ENCODE measurements at regions of chr11 and their contacts with region 1.

Region 1: DNA sequence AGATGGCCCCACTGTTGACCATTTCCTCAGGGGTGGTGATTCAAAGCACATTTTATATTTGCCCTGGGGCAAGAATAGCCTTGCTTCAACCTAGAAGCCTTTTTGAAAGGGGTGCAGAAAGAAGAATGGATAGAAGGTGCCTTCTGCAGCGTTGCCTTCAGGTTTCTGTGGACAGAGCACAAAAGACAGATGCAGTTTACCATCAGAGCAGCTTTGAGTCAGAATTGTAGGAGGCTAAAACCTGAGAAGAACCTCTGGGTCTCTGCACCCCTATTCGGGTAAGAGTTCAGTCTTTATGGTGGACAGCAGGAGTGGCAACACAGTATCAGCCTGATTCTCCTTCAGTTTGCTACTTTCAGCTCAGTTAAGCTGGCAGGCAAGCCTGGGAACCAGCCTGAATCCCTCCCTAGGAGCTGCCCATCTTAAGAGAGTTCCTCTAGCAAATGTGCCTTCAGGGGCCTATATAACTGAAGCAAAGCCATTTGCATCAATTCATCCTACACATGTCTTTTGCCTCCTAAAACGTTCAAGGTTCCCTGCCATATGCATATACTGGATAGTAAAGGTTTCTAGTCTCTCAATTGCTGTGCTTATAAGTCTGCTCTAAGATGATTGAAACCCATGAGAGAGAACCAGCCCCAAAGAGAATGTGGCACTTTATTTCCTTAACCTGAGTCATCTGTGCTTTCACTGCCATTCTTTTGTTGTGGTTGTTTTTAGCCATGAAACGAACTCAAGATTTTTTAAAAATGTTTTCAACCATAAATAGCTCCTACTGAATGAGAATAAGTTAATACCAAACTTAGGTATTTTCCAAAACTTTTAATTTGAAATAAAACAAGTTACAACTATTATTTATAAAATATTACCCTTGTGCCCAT is 123.0 kb downstream of the TRIM44 start:
- DNase-seq: no peak

Region 2: DNA sequence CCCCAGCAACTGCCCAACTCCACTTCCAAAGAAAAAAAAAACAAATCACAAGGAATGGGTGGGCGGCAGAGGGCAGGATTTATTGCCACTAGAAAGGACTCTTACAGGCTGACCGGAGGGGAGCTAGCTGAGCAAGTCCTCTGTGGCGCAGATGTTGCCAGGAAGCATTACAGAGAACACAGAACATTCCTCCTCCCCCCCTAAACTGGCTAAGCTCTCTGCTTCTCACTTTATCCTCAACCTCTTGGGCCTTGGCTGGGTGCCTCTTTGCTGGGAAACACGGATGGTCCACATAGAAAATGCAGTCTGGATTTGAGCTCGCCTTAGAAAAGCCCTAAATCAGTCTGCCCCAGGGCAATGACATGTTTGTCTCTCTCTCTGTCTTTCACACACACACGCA is 179.8 kb before region 1 on chr11:
- intact Hi-C with region 1: no loop called
- DNase-seq: no peak

Region 3: GRCh38 chr11:35735903-35736302 is 49.6 kb before region 1 on chr11:
- intact Hi-C with region 1: no loop called
- DNase-seq: no peak

Region 4: DNA sequence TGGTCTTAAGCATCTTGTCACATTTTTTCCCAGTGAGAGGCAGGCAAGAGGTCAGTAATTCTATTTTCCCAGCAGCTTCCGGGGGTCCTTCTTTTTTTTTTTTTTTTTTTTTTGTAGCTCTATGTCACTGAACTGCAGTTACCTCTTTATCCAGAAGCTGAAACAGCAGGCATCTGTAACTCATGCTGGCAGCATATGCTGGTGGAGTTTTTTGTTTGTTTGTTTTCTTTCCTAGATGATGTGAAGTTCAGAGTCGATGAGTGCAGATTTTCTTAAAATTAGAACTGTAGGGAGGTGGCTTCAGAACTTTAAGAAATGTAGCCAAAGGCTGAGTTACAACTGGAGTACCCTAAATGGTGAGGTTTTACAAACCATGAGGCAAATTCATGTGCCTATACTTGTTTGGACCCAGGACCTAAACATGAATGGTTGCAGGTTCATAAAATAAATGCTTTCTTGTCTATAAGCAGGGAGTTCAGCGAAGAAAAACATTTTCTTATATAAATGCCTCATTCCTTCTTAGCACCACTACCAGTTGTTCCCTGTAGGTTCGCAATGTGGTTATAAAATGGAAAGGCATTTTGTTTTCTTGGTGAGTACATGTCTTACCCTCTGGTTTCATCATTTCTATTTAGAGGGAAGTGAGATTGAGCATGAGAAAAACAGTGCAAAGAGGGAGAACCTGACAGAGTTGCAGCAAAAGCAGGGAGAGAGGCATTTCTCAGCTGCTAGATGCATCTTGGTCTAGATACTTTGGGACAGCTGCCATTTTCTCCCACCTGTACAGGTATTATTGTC is 39.0 kb before region 1 on chr11:
- intact Hi-C with region 1: loop called (anchors 5 kb)
- DNase-seq: no peak